ENCODE measurements at regions of chr17 and their contacts with region 1.

Region 1: GRCh38 chr17:40374821-40375498 is 10.4 kb upstream of the GJD3 start:
- DNase-seq: no peak
- ATAC-seq: no peak

Region 2: DNA sequence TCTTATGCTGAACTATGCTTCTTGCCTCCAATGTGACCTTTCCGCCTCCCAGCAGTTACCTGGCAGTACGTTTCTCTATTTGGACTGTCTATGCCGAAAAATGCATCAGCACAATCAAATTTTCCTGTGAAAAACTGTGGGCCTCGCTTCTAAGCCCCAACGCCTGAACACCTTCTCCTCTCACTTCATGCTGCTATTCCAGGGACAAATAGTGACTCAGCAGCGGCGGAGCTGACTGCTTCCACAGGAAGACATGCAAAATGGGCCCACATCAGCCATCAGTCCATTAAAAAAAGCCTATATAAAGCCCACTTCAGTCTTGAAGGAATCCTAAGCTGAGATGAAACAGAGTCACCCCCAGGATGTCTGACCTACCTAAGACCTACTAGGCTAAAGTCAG is 1565.1 kb before region 1 on chr17:
- intact Hi-C with region 1: loop called (anchors 5 kb)
- DNase-seq: no peak
- ATAC-seq: no peak

Region 3: GRCh38 chr17:40490289-40490853 is 115.4 kb after region 1 on chr17:
- intact Hi-C with region 1: no loop called
- DNase-seq: peak; percentile 81
- ATAC-seq: peak; percentile 70